Activated B cell treated with CpG ODN at 0.5 μM for 24 hours (primary cell): ENCODE measurements at regions of chr18 and their contacts with region 1.

Region 1: GRCh38 chr18:32470713-32471633 is at the start of gene GAREM1:
- DNase-seq: peak; percentile 67
- ATAC-seq: peak; percentile 95
- H3K4me3 Mint-ChIP-seq: peak within 1 kb of the TSS; percentile 83
- H3K27ac Mint-ChIP-seq: no peak within 1 kb of the TSS
- H3K4me1 Mint-ChIP-seq: peaks cover 27% of the 10 kb centered on the region
- H3K27me3 Mint-ChIP-seq: peaks cover 53% of the 10 kb centered on the region
- CTCF ChIP-seq: no peak
- total RNA-seq, gene GAREM1: not detected in 2 replicates

Region 2: DNA sequence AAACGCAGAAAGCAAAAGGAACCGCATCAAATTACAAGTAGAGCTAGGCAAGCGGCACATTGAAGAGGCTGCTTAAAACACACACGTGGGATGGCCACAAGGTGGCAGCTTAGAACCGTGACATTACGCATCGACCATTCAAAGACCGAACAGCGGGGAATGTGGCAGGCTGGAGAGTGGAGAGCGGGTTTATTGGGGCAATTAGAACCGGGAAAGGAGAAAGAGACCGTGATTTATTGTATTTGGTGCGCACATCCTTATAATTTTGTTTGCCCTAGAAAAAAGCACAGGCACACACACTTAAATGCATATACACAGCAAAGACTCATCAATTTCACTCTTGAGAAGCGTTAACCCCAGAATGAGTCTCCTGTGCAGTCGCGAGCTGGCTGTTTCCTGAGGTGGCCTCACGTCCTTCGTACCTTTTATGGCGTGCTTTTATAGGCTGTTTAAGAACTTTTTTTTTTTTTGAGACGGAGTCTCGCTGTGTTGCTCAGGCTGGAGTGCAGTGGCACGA is 312.8 kb before region 1 on chr18:
- CTCF ChIA-PET with region 1: interaction called, 4 read pairs
- POLR2A ChIA-PET with region 1: no interaction called
- intact Hi-C with region 1: loop called (anchors 2 kb)
- DNase-seq: peak; percentile 33
- ATAC-seq: peak; percentile 90
- H3K4me3 Mint-ChIP-seq: peak overlapping the region; percentile 21
- H3K27ac Mint-ChIP-seq: no peak overlapping the region
- H3K4me1 Mint-ChIP-seq: peaks cover 8% of the 10 kb centered on the region
- H3K27me3 Mint-ChIP-seq: peaks cover 7% of the 10 kb centered on the region
- CTCF ChIP-seq: peak; percentile 29

Region 3: GRCh38 chr18:32289483-32290075 is 181.4 kb before region 1 on chr18:
- CTCF ChIA-PET with region 1: interaction called, 3 read pairs
- POLR2A ChIA-PET with region 1: no interaction called
- intact Hi-C with region 1: loop called (anchors 2 kb)
- DNase-seq: no peak
- ATAC-seq: no peak
- H3K4me3 Mint-ChIP-seq: no peak overlapping the region
- H3K27ac Mint-ChIP-seq: no peak overlapping the region
- H3K4me1 Mint-ChIP-seq: no peaks in the 10 kb centered on the region
- H3K27me3 Mint-ChIP-seq: peaks cover 4% of the 10 kb centered on the region
- CTCF ChIP-seq: no peak